GM12878 (cell line): ENCODE measurements at regions of chr5 and their contacts with region 1.

Region 1: GRCh38 chr5:144191998-144192397 is 21.3 kb downstream of the KCTD16 start:
- DNase-seq: peak; percentile 73
- ATAC-seq: peak; percentile 85
- H3K4me3 ChIP-seq: no peak overlapping the region
- H3K27ac ChIP-seq: peak overlapping the region; percentile 73
- H3K4me1 ChIP-seq: peaks cover 42% of the 10 kb centered on the region
- H3K27me3 ChIP-seq: no peaks in the 10 kb centered on the region
- CTCF ChIP-seq: peak; percentile 52 to 73 (median 69); a peak in 5 of 6 replicates
- EP300 ChIP-seq: no peak
- POLR2A ChIP-seq: no peak
- RAD21 ChIP-seq: peak; percentile 78

Region 2: DNA sequence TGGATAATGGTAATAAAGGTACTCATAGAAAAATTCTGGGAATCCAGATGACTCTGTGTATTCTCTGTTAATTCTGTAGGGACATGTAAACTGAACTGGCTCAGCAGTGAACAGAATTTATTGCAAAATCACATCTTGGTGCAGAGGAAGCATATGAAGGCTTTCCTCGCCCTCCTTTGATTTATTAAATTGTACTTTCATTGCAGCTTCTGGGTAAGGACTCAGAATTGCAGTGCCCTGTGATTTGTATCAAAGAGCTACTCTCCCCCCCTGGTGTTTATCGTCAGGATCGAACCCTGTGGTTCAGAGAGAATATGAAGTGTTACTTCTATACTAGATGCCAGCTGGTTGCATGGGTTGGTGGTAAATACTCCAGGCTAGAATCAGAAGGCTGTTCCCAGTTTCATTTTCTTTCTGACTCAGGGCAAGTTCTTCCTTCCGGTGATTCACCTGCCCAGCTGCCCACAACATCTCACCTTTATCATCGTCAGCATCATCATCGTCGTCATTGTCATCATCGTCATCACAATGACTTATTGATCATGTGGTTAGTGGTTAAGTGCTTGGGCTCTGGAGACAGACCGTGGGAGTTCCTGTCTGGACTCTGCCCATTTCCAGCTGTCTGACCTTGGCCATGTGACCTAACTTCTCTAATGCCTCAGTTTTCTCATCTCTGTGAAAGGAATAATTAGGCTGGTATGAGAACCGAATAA is 1183.0 kb before region 1 on chr5:
- CTCF ChIA-PET with region 1: interaction called, 3 read pairs
- POLR2A ChIA-PET with region 1: no interaction called
- RAD21 ChIA-PET with region 1: interaction called, 5 read pairs
- SMC1A ChIA-PET with region 1: interaction called, 3 read pairs
- in situ Hi-C with region 1: loop called (anchors 10 kb)
- intact Hi-C with region 1: loop called (anchors 5 kb)
- DNase-seq: peak; percentile 98
- ATAC-seq: peak; percentile 90
- H3K4me3 ChIP-seq: no peak overlapping the region
- H3K27ac ChIP-seq: peak overlapping the region; percentile 47; the same call in 1 of the 2 replicates
- H3K4me1 ChIP-seq: peaks cover 27% of the 10 kb centered on the region
- H3K27me3 ChIP-seq: no peaks in the 10 kb centered on the region
- CTCF ChIP-seq: peak; percentile 13 to 25 (median 25); a peak in 2 of 6 replicates
- EP300 ChIP-seq: peak; percentile 100
- POLR2A ChIP-seq: no peak
- RAD21 ChIP-seq: 0 out of 2 replicates have a peak, but pooled peaks have one; percentile 30

Region 3: DNA sequence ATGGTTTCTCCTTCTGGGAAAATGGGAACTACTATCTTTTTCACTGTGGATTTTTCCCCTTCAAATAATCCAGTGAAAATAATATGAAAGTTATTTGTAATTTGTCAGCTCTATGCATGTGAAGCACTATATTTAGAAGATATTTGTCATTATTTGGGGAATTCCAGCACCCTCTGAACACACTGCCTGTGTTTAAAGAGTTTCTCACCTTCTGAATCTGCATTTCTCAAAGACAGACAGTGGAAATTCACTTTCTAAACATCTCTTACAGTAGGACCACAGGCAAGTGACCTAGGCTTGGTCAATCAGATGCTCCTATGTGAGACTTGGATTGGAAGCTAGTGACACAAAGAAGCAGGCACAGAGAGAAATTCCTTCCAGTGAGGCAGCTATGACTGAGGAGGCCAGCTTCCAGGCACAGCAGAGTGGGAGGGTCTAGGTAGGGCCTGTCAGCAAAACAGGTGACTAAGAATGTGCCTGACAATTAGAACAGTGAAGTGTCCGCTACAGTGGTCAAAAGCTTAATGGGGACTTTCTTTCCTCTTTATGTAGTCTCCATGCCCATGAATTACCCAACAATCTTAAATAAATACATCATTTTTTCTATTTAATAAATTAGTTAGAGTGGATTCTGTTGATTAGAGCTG is 212.8 kb before region 1 on chr5:
- CTCF ChIA-PET with region 1: interaction called, 5 read pairs
- POLR2A ChIA-PET with region 1: interaction called, 3 read pairs
- RAD21 ChIA-PET with region 1: interaction called, 4 read pairs
- SMC1A ChIA-PET with region 1: interaction called, 18 read pairs
- in situ Hi-C with region 1: no loop called
- intact Hi-C with region 1: loop called (anchors 5 kb)
- DNase-seq: no peak
- ATAC-seq: peak; percentile 92
- H3K4me3 ChIP-seq: no peak overlapping the region
- H3K27ac ChIP-seq: peak overlapping the region; percentile 6; the same call in 1 of the 2 replicates
- H3K4me1 ChIP-seq: no peaks in the 10 kb centered on the region
- H3K27me3 ChIP-seq: no peaks in the 10 kb centered on the region
- CTCF ChIP-seq: no peak
- EP300 ChIP-seq: 0 out of 4 replicates have a peak, but pooled peaks of 1 of the 2 experiments have one; percentile 11
- POLR2A ChIP-seq: no peak
- RAD21 ChIP-seq: no peak

Region 4: DNA sequence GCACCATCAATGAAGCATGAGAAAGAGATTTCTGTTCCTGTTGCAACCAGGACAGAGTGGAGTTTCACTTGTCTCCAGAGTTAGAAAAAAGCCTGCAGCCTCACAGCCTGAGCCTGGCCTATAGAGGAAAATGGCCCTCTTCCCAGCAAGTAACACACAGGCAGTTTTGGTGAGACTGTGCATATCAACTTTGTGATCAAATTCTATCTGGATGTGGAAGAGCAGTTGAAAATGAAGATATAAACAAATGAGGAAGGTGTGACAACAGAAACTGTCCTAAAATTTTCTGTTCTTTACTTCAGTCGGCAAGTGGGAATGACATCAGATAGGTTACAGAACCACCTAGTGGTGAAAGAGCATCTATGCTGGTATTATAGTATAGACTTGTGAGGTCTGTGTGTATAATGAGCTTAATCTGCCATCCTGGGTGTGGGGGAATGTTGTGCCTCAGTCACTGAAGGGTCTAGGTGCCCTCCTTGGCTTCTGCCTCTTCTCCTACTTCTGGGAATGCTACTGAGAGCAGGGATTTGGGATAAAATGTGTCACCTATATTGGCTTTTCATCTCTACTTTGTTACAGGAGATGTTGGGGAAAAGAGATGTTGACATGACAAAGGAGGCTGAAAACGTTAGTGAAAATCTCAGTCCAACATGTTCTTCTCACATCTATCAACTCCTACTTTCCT is 49.7 kb before region 1 on chr5:
- CTCF ChIA-PET with region 1: interaction called, 20 read pairs
- POLR2A ChIA-PET with region 1: no interaction called
- RAD21 ChIA-PET with region 1: interaction called, 6 read pairs
- SMC1A ChIA-PET with region 1: interaction called, 15 read pairs
- in situ Hi-C with region 1: no loop called
- intact Hi-C with region 1: no loop called
- DNase-seq: peak; percentile 25
- ATAC-seq: peak; percentile 99
- H3K4me3 ChIP-seq: no peak overlapping the region
- H3K27ac ChIP-seq: no peak overlapping the region
- H3K4me1 ChIP-seq: peaks cover 11% of the 10 kb centered on the region
- H3K27me3 ChIP-seq: no peaks in the 10 kb centered on the region; a peak in 1 of 4 replicates
- CTCF ChIP-seq: peak; percentile 64 to 71 (median 69)
- EP300 ChIP-seq: no peak
- POLR2A ChIP-seq: no peak
- RAD21 ChIP-seq: peak; percentile 83

Region 5: GRCh38 chr5:144170276-144171024 is 21.5 kb before region 1 on chr5 and contains the starts of genes KCTD16 and YIPF5:
- CTCF ChIA-PET with region 1: interaction called, 36 read pairs
- POLR2A ChIA-PET with region 1: interaction called, 6 read pairs
- RAD21 ChIA-PET with region 1: interaction called, 39 read pairs
- SMC1A ChIA-PET with region 1: interaction called, 41 read pairs
- in situ Hi-C with region 1: no loop called
- intact Hi-C with region 1: loop called (anchors 2 kb)
- DNase-seq: peak; percentile 96
- ATAC-seq: peak; percentile 99
- H3K4me3 ChIP-seq: peak within 1 kb of the TSS; percentile 93
- H3K27ac ChIP-seq: peak within 1 kb of the TSS; percentile 87
- H3K4me1 ChIP-seq: no peaks in the 10 kb centered on the region
- H3K27me3 ChIP-seq: no peaks in the 10 kb centered on the region
- CTCF ChIP-seq: no peak
- EP300 ChIP-seq: no peak
- POLR2A ChIP-seq: peak; percentile 88
- RAD21 ChIP-seq: no peak
- polyA plus RNA-seq, gene KCTD16: 0.03 TPM in 1 of 2 experiments, not detected in the other
- polyA plus RNA-seq, gene YIPF5: 25.4 to 47.9 TPM